ENCODE measurements at regions of chr16 and their contacts with region 1.

Region 1: GRCh38 chr16:68093816-68094613 is 8.8 kb downstream of the NFATC3 start:
- DNase-seq: peak; percentile 56
- H3K4me3 ChIP-seq: no peak overlapping the region
- H3K27ac ChIP-seq: no peak overlapping the region
- H3K4me1 ChIP-seq: peaks cover 56% of the 10 kb centered on the region
- CTCF ChIP-seq: peak; percentile 87

Region 2: GRCh38 chr16:68229431-68230198 is 135.6 kb after region 1 on chr16:
- CTCF ChIA-PET with region 1: interaction called, 8 read pairs
- POLR2A ChIA-PET with region 1: no interaction called
- intact Hi-C with region 1: loop called (anchors 1 kb)
- DNase-seq: peak; percentile 71
- H3K4me3 ChIP-seq: no peak overlapping the region
- H3K27ac ChIP-seq: no peak overlapping the region
- H3K4me1 ChIP-seq: peaks cover 44% of the 10 kb centered on the region
- CTCF ChIP-seq: peak; percentile 97

Measured in OCI-LY7 (cell line).